ENCODE measurements at regions of chr13 and their contacts with region 1.

Region 1: DNA sequence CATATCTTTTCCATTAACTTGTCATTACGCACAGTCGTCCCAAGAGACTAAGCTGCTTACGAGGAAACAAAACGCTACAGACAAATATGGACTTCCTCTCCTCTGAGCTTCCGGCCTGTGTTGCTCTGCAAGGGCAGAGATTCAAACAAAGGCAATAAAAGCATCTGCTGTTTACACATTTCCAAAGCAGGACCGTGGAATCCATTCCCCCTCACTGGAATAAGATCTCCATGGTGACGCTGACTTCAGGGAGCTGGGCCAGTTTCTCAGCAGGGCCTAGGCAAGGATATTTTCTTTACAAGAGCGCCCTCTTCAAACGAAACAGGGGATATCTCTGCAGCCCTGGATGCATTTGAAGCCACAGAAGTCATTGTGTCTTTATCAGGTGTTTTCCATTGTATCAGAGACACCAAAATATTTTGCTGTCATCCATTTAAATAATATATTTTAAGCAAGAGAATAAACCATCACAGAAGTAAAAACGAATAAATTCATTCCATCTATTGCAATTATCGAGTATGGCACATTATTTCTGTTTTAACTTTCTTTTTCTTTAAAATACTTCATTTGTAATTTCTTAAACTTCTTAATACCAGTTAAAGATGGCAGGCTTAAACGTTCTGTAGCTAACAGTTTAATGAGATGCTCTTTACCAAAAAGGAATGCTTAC is 177.5 kb downstream of the DCLK1 start:
- DNase-seq: peak; percentile 65 to 83
- ATAC-seq: peak; percentile 88 to 90
- H3K4me3 ChIP-seq: peak overlapping the region in 1 of 4 donors; percentile 25
- H3K27ac ChIP-seq: peak overlapping the region in 2 of 4 donors; percentile 19 to 20
- H3K4me1 ChIP-seq: peaks cover 20 to 30% of the 10 kb centered on the region in 2 donors
- H3K27me3 ChIP-seq: no peaks in the 10 kb centered on the region
- CTCF ChIP-seq: peak in 3 of 5 experiments; percentile 39 to 57 (median 48)
- POLR2A ChIP-seq: no peak

Region 2: DNA sequence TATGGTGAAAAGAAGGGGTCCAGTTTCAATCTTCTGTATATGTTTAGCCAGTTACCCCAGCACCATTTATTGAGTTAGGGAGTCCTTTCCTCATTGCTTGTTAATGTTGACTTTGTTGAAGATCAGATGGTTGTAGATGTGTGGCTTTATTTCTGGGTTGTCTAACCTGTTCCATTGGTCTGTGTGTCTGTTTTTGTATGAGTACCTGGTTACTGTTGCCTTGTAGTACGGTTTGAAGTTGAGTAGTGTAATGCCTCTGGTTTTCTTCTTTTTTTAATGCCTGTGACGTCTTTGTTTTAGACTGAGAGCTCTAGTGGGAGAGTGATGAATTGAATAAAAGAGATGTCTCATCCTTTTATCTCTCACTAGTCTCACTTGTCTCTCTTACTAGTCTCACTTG is 928.3 kb before region 1 on chr13:
- in situ Hi-C with region 1: no loop called
- intact Hi-C with region 1: no loop called
- DNase-seq: no peak
- ATAC-seq: no peak
- H3K4me3 ChIP-seq: no peak overlapping the region
- H3K27ac ChIP-seq: no peak overlapping the region
- H3K4me1 ChIP-seq: no peaks in the 10 kb centered on the region
- H3K27me3 ChIP-seq: no peaks in the 10 kb centered on the region
- CTCF ChIP-seq: no peak
- POLR2A ChIP-seq: no peak

Region 3: GRCh38 chr13:35475960-35476943 is 477.4 kb before region 1 on chr13 and contains the start of gene MAB21L1:
- in situ Hi-C with region 1: loop called in 3 of 4 experiments (anchors 10 kb)
- intact Hi-C with region 1: no loop called
- DNase-seq: peak; percentile 80 to 81
- ATAC-seq: peak; percentile 57 to 75
- H3K4me3 ChIP-seq: peak within 1 kb of the TSS; percentile 67 to 87 (median 76)
- H3K27ac ChIP-seq: peak within 1 kb of the TSS; percentile 86 to 95 (median 88)
- H3K4me1 ChIP-seq: peaks cover 9 to 27% of the 10 kb centered on the region in 2 donors
- H3K27me3 ChIP-seq: no peaks in the 10 kb centered on the region
- CTCF ChIP-seq: no peak
- POLR2A ChIP-seq: peak; percentile 84 to 85
- total RNA-seq, gene MAB21L1: 3.2 to 4.2 (median 3.5) TPM

Region 4: DNA sequence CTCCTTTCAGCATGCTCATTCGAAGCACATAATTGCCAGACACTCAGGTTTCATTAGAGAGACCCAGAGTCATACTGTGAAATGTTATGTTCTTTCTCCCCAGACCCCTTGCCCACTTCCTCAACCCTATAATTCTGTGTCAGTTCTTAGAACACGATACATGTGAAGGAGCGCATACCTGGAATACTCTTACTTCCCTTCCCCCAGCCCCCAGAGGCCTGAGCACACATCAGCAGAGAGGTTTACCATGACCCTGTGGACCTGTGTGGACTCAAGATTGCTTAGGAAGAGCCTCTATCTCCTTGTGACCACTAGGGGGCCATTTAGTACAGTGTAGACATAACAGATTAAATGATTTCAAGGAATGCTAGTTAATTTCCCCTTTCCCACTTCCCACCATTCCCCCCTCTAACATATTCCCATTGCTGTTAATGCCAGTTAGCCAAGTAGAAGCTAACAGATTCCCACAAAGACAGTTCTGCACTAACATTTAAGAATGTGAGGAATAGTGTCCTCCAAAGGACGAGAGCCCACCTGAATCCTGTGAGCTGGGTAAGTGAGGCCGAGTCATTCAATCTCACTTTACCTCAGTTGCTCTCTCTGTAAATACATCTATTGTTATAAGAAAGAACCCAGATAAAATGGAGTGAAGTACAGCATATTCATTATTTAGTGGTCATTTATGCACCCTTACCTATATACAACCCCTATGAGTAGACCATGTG is 323.0 kb before region 1 on chr13:
- in situ Hi-C with region 1: loop called in 1 of 4 experiments (anchors 25 kb)
- intact Hi-C with region 1: loop called (anchors 1 kb)
- DNase-seq: no peak
- ATAC-seq: peak in 1 of 2 donors; percentile 60
- H3K4me3 ChIP-seq: no peak overlapping the region
- H3K27ac ChIP-seq: no peak overlapping the region
- H3K4me1 ChIP-seq: no peaks in the 10 kb centered on the region
- H3K27me3 ChIP-seq: no peaks in the 10 kb centered on the region
- CTCF ChIP-seq: peak in 4 of 5 experiments; percentile 46 to 59 (median 55)
- POLR2A ChIP-seq: no peak

Region 5: GRCh38 chr13:35712907-35713761 is 240.5 kb before region 1 on chr13:
- in situ Hi-C with region 1: loop called in 1 of 4 experiments (anchors 10 kb)
- intact Hi-C with region 1: no loop called
- DNase-seq: no peak
- ATAC-seq: no peak
- H3K4me3 ChIP-seq: no peak overlapping the region
- H3K27ac ChIP-seq: no peak overlapping the region
- H3K4me1 ChIP-seq: peaks cover 3 to 6% of the 10 kb centered on the region in 2 donors
- H3K27me3 ChIP-seq: no peaks in the 10 kb centered on the region
- CTCF ChIP-seq: no peak
- POLR2A ChIP-seq: no peak

Region 6: GRCh38 chr13:35720690-35721554 is 232.8 kb before region 1 on chr13:
- in situ Hi-C with region 1: loop called in 2 of 4 experiments (anchors 10 kb)
- intact Hi-C with region 1: loop called (anchors 5 kb)
- DNase-seq: peak in 1 of 2 donors; percentile 22
- ATAC-seq: no peak
- H3K4me3 ChIP-seq: peak overlapping the region in 2 of 4 donors; percentile 23 to 34
- H3K27ac ChIP-seq: peak overlapping the region in 3 of 4 donors; percentile 3 to 19 (median 9)
- H3K4me1 ChIP-seq: peaks cover 22 to 23% of the 10 kb centered on the region in 2 donors
- H3K27me3 ChIP-seq: no peaks in the 10 kb centered on the region
- CTCF ChIP-seq: peak; percentile 66 to 91 (median 82)
- POLR2A ChIP-seq: no peak

Region 7: DNA sequence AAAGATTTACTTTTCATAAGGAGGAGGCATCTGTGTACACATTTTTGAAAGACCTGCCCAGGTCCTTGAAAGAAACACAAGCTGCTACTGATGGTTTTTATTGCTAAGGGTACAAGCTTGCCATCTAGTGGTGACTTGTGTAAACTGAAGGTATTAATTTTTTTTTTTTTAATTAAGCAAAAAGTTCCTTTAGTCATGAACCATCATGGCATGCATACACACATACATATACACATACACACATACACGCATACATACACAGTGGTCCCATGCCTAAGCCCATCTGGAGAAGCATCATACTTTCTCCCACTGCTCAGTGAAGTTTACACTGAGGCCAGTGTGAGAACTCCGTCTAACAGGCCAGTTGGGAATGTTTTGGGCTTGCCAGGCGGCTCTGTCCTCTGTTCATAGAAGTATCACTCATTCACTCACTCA is 135.0 kb before region 1 on chr13:
- in situ Hi-C with region 1: no loop called
- intact Hi-C with region 1: loop called (anchors 5 kb)
- DNase-seq: no peak
- ATAC-seq: peak; percentile 53 to 60
- H3K4me3 ChIP-seq: no peak overlapping the region
- H3K27ac ChIP-seq: no peak overlapping the region
- H3K4me1 ChIP-seq: no peaks in the 10 kb centered on the region
- H3K27me3 ChIP-seq: no peaks in the 10 kb centered on the region
- CTCF ChIP-seq: peak in 4 of 5 experiments; percentile 30 to 59 (median 52)
- POLR2A ChIP-seq: no peak